Heart left ventricle (tissue), 16 donors: ENCODE measurements at regions of chr20 and their contacts with region 1.

Region 1: GRCh38 chr20:17233626-17234025 is 6.8 kb downstream of the PCSK2 start:
- DNase-seq: no peak
- ATAC-seq: no peak
- H3K4me3 ChIP-seq: no peak overlapping the region
- H3K27ac ChIP-seq: no peak overlapping the region
- H3K4me1 ChIP-seq: no peaks in the 10 kb centered on the region
- H3K27me3 ChIP-seq: peaks cover 0 to 18% (median 5%) of the 10 kb centered on the region in 9 donors
- CTCF ChIP-seq: no peak
- POLR2A ChIP-seq: no peak

Region 2: GRCh38 chr20:16922834-16923233 is 310.8 kb before region 1 on chr20:
- intact Hi-C with region 1: no loop called
- DNase-seq: no peak
- ATAC-seq: no peak
- H3K4me3 ChIP-seq: no peak overlapping the region
- H3K27ac ChIP-seq: no peak overlapping the region
- H3K4me1 ChIP-seq: no peaks in the 10 kb centered on the region
- H3K27me3 ChIP-seq: no peaks in the 10 kb centered on the region
- CTCF ChIP-seq: no peak
- POLR2A ChIP-seq: no peak

Region 3: DNA sequence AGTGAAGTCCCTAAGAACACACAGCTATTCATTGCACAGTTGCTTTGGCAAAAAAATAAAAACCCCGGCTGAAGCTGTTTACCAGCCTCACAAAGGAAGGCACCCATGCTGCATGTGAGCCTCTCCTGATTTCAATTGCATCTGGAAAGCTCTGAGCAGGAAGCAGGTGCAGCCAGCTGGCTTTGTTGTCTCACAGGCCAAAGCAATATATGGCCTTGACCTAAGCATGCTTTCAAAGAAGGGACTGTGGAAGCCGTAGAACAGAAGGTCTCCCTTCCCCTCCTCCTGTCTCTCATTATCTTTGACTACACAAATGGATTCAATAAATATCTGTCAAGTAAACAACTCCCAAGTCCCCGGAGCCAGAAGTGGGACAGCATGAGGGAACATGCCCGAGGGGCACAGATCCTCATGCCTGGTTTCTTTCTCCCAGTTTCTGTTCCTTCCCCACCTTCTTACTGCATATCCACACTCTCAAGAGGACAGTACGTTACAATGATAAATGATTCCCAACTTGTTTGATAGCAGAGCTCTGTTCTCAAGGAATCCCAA is 64.0 kb before region 1 on chr20:
- intact Hi-C with region 1: loop called in 1 of 10 experiments (anchors 10 kb)
- DNase-seq: peak in 1 of 5 donors; percentile 26
- ATAC-seq: peak in 1 of 4 donors; percentile 45
- H3K4me3 ChIP-seq: no peak overlapping the region
- H3K27ac ChIP-seq: no peak overlapping the region
- H3K4me1 ChIP-seq: no peaks in the 10 kb centered on the region
- H3K27me3 ChIP-seq: no peaks in the 10 kb centered on the region
- CTCF ChIP-seq: no peak
- POLR2A ChIP-seq: no peak